Mammary epithelial cell (primary cell): ENCODE measurements at regions of chr6 and their contacts with region 1.

Region 1: DNA sequence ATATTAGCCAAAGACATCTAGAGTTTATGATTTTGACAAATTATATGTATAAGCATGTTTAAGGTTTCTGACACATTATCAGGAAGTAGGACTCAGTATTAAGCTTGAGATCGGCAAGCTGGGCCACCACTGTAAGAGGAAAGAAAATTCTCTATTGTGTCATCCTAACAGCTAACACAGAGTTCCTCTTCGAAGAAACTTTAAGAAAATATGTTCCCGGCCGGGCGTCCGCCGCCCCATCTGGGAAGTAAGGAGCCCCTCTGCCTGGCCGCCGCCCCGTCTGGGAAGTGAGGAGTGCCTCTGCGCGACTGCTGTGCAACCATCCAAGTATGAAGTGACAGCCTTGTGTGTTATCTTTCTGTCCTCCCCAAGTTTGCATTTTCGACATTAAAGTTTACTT is 23.0 kb downstream of the USP49 start:
- DNase-seq: no peak
- H3K4me3 ChIP-seq: no peak overlapping the region
- H3K27ac ChIP-seq: no peak overlapping the region
- H3K4me1 ChIP-seq: no peaks in the 10 kb centered on the region
- H3K27me3 ChIP-seq: no peaks in the 10 kb centered on the region
- CTCF ChIP-seq: no peak

Region 2: GRCh38 chr6:41675176-41675770 is 196.9 kb before region 1 on chr6:
- CTCF ChIA-PET with region 1: no interaction called
- dilution Hi-C with region 1: no loop called
- in situ Hi-C with region 1: no loop called
- intact Hi-C with region 1: no loop called
- DNase-seq: no peak
- H3K4me3 ChIP-seq: no peak overlapping the region
- H3K27ac ChIP-seq: no peak overlapping the region
- H3K4me1 ChIP-seq: no peaks in the 10 kb centered on the region
- H3K27me3 ChIP-seq: no peaks in the 10 kb centered on the region
- CTCF ChIP-seq: no peak

Region 3: GRCh38 chr6:41801380-41801779 is 70.8 kb before region 1 on chr6:
- CTCF ChIA-PET with region 1: no interaction called
- dilution Hi-C with region 1: loop called (anchors 5 kb)
- in situ Hi-C with region 1: no loop called
- intact Hi-C with region 1: no loop called
- DNase-seq: no peak
- H3K4me3 ChIP-seq: no peak overlapping the region
- H3K27ac ChIP-seq: no peak overlapping the region
- H3K4me1 ChIP-seq: no peaks in the 10 kb centered on the region
- H3K27me3 ChIP-seq: no peaks in the 10 kb centered on the region
- CTCF ChIP-seq: peak; percentile 65 to 70

Region 4: GRCh38 chr6:41832263-41832662 is 39.9 kb before region 1 on chr6:
- CTCF ChIA-PET with region 1: no interaction called
- dilution Hi-C with region 1: loop called (anchors 5 kb)
- in situ Hi-C with region 1: no loop called
- intact Hi-C with region 1: no loop called
- DNase-seq: no peak
- H3K4me3 ChIP-seq: no peak overlapping the region
- H3K27ac ChIP-seq: no peak overlapping the region
- H3K4me1 ChIP-seq: no peaks in the 10 kb centered on the region
- H3K27me3 ChIP-seq: no peaks in the 10 kb centered on the region
- CTCF ChIP-seq: no peak